Activated CD4-positive, alpha-beta T cell treated with anti-CD3 and anti-CD28 coated beads, Interleukin-2, amount 10 ng/mL, durations not matched to agents 24 days and 14 days (primary cell): ENCODE measurements at regions of chr3 and their contacts with region 1.

Region 1: GRCh38 chr3:8441969-8442559 is 59.6 kb upstream of the LMCD1 start:
- DNase-seq: no peak
- H3K4me3 Mint-ChIP-seq: no peak overlapping the region
- H3K27ac Mint-ChIP-seq: no peak overlapping the region
- H3K4me1 Mint-ChIP-seq: no peaks in the 10 kb centered on the region
- H3K27me3 Mint-ChIP-seq: no peaks in the 10 kb centered on the region

Region 2: DNA sequence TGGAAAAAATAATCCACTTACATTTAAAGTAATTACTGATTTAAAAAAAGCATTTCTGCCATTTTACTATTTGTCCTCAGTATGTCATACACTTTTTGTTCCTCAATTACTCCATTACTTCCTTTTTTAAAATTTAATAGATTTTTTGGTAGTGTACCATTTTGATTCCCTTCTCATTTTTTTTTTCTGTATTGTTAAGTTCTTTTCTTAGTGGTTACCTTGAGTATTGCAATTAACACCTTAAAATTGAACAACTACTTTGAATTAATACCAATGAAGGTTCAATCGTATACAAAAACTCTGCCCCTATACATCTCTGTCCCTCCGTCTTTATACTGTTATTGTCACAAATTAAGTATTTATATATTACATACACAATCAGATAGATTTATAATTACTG is 181.0 kb before region 1 on chr3:
- intact Hi-C with region 1: no loop called
- DNase-seq: no peak
- H3K4me3 Mint-ChIP-seq: no peak overlapping the region
- H3K27ac Mint-ChIP-seq: no peak overlapping the region
- H3K4me1 Mint-ChIP-seq: no peaks in the 10 kb centered on the region
- H3K27me3 Mint-ChIP-seq: no peaks in the 10 kb centered on the region

Region 3: GRCh38 chr3:8416965-8417364 is 25.1 kb before region 1 on chr3:
- intact Hi-C with region 1: no loop called
- DNase-seq: no peak
- H3K4me3 Mint-ChIP-seq: no peak overlapping the region
- H3K27ac Mint-ChIP-seq: no peak overlapping the region
- H3K4me1 Mint-ChIP-seq: no peaks in the 10 kb centered on the region
- H3K27me3 Mint-ChIP-seq: no peaks in the 10 kb centered on the region

Region 4: DNA sequence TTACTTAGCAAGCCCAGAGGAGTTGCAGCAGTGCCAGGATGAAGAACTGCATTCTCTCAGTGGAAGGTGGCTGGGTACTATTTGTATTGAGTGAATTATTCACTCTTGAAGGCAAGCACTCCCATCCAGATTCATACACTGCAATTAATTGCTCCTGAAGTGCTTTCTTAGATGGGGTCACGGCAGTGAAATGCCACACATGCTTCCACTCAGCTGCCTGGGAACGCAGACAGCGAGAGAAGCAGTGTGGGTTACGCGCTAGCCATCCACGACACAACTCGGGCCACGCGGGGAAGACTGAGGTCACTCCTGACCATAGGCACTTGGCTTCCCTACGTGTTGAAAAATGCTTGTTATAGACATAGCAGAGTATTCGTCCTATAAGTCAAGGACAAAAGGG is 28.7 kb after region 1 on chr3:
- intact Hi-C with region 1: no loop called
- DNase-seq: no peak
- H3K4me3 Mint-ChIP-seq: no peak overlapping the region
- H3K27ac Mint-ChIP-seq: no peak overlapping the region
- H3K4me1 Mint-ChIP-seq: no peaks in the 10 kb centered on the region
- H3K27me3 Mint-ChIP-seq: peaks cover 6% of the 10 kb centered on the region

Region 5: GRCh38 chr3:8622873-8623691 is 181.0 kb after region 1 on chr3:
- intact Hi-C with region 1: loop called (anchors 5 kb)
- DNase-seq: peak; percentile 78
- H3K4me3 Mint-ChIP-seq: no peak overlapping the region
- H3K27ac Mint-ChIP-seq: no peak overlapping the region
- H3K4me1 Mint-ChIP-seq: peaks cover 3% of the 10 kb centered on the region
- H3K27me3 Mint-ChIP-seq: no peaks in the 10 kb centered on the region